PC-3 (cell line): ENCODE measurements at regions of chr3 and their contacts with region 1.

Region 1: DNA sequence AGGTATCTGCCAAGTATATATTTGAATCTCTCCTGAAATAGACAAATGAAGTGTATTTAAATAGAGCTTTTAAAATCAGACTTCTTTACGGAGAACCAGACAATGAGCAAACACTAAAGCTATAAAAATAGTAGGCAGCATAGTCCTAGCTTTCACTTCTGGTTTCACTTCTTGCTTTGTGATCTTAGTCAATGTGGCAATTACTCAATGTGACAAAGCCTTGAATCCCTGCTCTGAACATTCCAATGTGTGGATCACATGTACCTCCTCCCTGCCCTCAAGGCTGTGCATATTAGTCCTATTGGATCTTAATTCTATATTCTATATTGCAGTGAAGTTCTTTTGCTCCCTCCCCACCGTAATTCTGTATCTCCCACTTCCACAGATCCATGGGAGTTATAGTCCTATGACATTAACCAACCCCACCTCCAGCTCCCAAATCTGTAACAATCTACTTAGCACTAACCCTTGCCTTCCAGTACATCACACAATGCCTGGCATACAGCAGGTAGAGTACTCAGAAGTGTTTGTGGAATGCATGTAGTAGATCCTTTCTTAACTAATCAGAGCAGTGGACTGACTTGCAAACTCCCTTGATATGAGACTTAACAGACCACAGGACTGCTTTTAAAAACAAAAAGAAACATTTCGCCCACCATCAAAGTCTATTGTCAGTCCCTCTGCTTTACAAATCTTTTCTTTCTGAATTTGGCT is 24.3 kb upstream of the CP start:
- DNase-seq: peak; percentile 86
- ATAC-seq: peak; percentile 66
- H3K4me3 ChIP-seq: peak overlapping the region; percentile 42
- H3K27ac ChIP-seq: peak overlapping the region; percentile 95
- H3K4me1 ChIP-seq: peaks cover 40% of the 10 kb centered on the region
- H3K27me3 ChIP-seq: no peaks in the 10 kb centered on the region
- CTCF ChIP-seq: no peak

Region 2: GRCh38 chr3:149129326-149130205 is 116.3 kb before region 1 on chr3 and contains the start of gene HPS3:
- CTCF ChIA-PET with region 1: no interaction called
- POLR2A ChIA-PET with region 1: interaction called, 3 read pairs
- intact Hi-C with region 1: loop called (anchors 2 kb)
- DNase-seq: peak; percentile 95
- ATAC-seq: peak; percentile 90
- H3K4me3 ChIP-seq: peak within 1 kb of the TSS; percentile 78
- H3K27ac ChIP-seq: peak within 1 kb of the TSS; percentile 65
- H3K4me1 ChIP-seq: peaks cover 38% of the 10 kb centered on the region
- H3K27me3 ChIP-seq: no peaks in the 10 kb centered on the region
- CTCF ChIP-seq: no peak
- total RNA-seq, gene HPS3: 11.3 and 13.9 TPM in 2 replicates

Region 3: GRCh38 chr3:149180057-149180573 is 65.8 kb before region 1 on chr3:
- CTCF ChIA-PET with region 1: no interaction called
- POLR2A ChIA-PET with region 1: no interaction called
- intact Hi-C with region 1: loop called (anchors 1 kb)
- DNase-seq: peak; percentile 99
- ATAC-seq: peak; percentile 97
- H3K4me3 ChIP-seq: no peak overlapping the region
- H3K27ac ChIP-seq: peak overlapping the region; percentile 84
- H3K4me1 ChIP-seq: peaks cover 26% of the 10 kb centered on the region
- H3K27me3 ChIP-seq: no peaks in the 10 kb centered on the region
- CTCF ChIP-seq: no peak

Region 4: DNA sequence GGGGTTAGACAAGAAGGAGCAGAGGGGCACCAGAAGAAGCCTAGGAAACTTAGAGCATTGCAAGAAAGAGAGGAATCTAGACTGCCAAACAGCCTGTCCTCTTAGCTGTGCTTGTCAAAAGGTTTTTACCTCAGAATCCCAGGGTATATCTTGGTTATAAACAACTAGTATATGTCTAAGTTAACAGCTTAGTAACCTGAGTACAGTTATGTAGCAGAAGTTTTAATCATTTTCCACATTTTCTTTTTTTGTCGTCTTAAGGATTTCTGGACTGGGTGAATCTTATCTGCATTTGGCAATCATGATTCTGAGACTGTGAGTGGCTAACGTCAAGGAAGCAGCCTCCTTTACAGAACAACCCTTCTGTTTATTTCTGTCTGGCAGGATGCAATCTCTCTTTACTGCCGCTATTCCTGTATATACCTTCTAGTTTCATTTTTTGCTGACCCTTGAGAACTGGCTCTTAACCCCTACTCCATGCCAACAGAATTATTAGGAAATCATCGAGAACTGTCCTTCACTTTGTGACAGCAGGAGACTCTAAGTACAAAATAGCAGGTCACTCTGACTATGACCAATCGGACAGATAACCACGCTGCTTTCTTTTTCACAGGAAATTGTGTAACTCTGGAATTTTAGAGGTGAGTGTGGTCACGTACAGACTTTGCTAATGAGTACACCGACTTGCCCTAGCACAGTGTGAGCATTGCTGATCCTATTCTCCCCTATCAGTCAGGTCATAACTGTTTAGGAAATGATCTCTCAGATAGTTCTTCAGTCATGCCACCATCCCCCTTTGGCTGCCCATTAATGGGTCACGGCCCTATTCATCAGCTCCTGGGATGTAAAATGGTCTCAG is 20.9 kb before region 1 on chr3:
- CTCF ChIA-PET with region 1: no interaction called
- POLR2A ChIA-PET with region 1: no interaction called
- intact Hi-C with region 1: loop called (anchors 1 kb)
- DNase-seq: peak; percentile 73
- ATAC-seq: peak; percentile 81
- H3K4me3 ChIP-seq: peak overlapping the region; percentile 73
- H3K27ac ChIP-seq: peak overlapping the region; percentile 38
- H3K4me1 ChIP-seq: peaks cover 11% of the 10 kb centered on the region
- H3K27me3 ChIP-seq: no peaks in the 10 kb centered on the region
- CTCF ChIP-seq: no peak